ENCODE measurements at regions of chr12 and their contacts with region 1.

Region 1: DNA sequence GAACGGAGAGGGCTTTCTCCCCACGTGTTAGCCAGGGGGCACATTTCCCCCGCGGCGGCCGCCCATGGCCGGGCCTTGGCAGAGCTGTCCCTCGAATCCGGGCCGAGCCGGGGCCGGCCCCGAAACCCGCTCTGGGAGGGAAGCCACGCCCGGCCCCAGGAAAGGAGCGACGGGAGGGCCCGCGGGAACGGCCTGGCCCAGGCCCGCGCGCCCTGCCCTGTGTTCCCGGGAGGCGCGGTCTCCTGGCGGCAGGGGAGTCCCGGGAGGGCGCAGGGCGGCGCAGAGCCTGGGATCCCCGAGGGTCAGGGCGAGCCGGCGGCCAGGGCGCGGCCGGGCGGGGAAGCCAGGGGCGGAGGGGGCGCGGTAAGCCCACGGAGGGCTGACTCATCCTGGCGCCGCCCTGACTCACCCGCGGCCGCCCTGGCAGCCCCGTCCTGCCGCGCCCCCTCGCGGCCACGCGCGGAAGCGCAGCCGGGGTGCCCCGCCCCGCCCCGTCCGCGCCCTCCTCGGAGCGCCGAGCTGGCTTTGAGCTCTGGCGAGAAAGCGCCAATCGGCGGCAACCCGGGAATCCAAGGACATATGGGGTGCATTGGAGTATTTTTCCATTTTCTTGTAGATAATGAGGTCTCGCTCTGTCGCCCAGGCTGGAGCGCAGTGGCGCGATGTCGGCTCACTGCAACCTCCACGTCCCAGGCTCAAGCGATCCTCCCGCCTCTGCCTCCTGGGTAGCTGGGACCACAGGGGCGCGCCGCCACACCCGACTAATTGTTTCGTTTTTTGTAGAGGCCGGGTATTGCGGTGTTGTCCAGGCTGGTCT is 31.8 kb upstream of the PLEKHG6 start:
- DNase-seq: peak; percentile 88
- H3K4me3 Mint-ChIP-seq: peak overlapping the region; percentile 74
- H3K27ac Mint-ChIP-seq: no peak overlapping the region
- H3K4me1 Mint-ChIP-seq: peaks cover 6% of the 10 kb centered on the region
- H3K27me3 Mint-ChIP-seq: peaks cover 38% of the 10 kb centered on the region

Region 2: DNA sequence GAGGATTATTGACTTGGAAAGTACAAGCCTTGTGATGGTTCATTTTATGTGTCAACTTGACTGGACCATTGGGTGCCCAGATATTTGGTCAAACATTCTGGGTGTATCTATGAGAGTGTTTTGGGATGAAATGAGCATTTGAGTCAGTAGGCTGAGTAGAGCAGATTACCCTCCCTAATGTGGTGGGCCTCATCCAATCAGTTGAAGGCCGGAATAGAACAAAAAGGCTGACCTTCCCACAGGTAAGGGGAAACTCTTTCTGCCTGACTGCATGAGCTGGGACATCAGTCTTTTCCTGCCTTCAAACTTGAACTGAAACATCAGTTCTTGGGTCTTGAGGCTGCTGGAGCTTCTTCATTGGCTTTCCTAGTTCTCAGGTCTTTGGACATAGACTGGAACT is 431.7 kb before region 1 on chr12:
- CTCF ChIA-PET with region 1: no interaction called
- POLR2A ChIA-PET with region 1: no interaction called
- intact Hi-C with region 1: no loop called
- DNase-seq: no peak
- H3K4me3 Mint-ChIP-seq: no peak overlapping the region
- H3K27ac Mint-ChIP-seq: no peak overlapping the region
- H3K4me1 Mint-ChIP-seq: no peaks in the 10 kb centered on the region
- H3K27me3 Mint-ChIP-seq: peaks cover 2% of the 10 kb centered on the region

Region 3: DNA sequence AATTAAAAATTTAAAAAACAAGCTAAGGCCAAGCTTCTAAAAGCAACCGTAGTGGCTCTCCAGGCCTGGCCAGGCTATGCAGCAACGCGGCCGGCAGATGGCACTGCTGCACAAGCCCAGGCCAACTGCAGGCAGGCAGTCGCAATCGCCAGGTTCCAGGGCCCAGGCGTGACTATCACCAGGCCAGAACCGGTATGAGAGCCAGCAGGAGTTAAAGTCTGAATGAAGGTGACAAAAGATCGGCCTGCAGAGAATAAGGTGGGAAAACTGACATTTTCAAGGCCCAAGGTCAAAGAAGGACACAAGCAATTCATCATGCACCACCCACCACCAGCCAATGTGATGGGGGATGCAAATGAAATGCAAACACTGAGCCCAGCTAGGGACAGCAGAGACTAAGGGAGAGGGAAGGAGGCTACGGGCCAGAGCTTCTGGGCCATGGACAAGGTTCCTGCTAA is 290.0 kb before region 1 on chr12:
- CTCF ChIA-PET with region 1: interaction called, 26 read pairs
- POLR2A ChIA-PET with region 1: no interaction called
- intact Hi-C with region 1: no loop called
- DNase-seq: peak; percentile 79
- H3K4me3 Mint-ChIP-seq: no peak overlapping the region
- H3K27ac Mint-ChIP-seq: no peak overlapping the region
- H3K4me1 Mint-ChIP-seq: no peaks in the 10 kb centered on the region
- H3K27me3 Mint-ChIP-seq: no peaks in the 10 kb centered on the region

Region 4: DNA sequence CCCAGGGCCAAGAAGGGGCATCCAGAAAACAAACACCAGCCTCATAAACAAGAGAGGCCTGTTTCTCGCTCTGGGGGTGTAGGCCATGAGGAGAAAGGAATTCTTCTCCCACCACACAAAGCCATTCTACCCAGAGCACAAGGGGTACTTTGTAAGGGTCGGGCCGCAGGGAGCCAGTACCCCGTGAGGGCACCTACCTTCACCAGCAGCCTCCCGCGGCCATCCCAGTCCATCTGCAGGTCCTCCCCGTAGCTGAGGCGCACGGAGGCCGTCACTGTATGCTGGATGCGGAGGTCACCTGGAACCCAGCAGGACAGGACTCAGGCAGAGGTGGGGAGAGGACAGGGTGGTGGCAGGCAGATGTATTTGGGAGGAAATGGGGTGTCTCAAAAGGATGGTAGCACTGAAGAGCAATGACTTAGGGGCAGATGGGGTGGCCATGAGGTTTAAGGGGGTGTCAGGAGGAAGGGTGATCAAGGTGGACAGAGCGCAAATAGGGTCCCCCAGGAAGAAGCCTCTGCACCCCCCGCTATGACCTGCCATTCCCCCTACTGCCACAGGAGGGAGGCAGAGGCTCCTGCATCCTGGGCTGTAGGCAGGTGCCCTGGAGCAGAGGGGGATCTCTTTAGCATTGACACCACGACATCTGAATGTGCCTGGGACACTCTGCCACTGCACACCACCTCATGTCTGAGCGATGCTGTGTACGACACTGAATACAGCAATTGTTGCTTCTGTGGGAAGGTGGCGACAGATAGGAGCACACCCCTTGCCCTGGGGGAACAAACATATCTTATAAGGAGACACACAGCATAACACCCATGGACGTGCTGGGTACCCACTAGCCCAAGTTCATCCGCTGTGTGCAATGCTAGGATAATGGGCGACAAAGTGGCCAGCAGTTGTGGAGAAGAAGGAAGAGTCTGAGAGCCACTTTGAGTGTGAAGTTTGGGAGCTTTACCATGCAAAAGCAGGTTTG is 215.6 kb before region 1 on chr12:
- CTCF ChIA-PET with region 1: interaction called, 33 read pairs
- POLR2A ChIA-PET with region 1: no interaction called
- intact Hi-C with region 1: loop called (anchors 1 kb)
- DNase-seq: peak; percentile 66
- H3K4me3 Mint-ChIP-seq: no peak overlapping the region
- H3K27ac Mint-ChIP-seq: no peak overlapping the region
- H3K4me1 Mint-ChIP-seq: no peaks in the 10 kb centered on the region
- H3K27me3 Mint-ChIP-seq: peaks cover under 1% of the 10 kb centered on the region

Region 5: GRCh38 chr12:6167327-6168259 is 111.1 kb before region 1 on chr12:
- CTCF ChIA-PET with region 1: interaction called, 16 read pairs
- POLR2A ChIA-PET with region 1: no interaction called
- intact Hi-C with region 1: no loop called
- DNase-seq: peak; percentile 84
- H3K4me3 Mint-ChIP-seq: peak overlapping the region; percentile 28
- H3K27ac Mint-ChIP-seq: peak overlapping the region; percentile 87
- H3K4me1 Mint-ChIP-seq: peaks cover 24% of the 10 kb centered on the region
- H3K27me3 Mint-ChIP-seq: peaks cover 1% of the 10 kb centered on the region

Region 6: GRCh38 chr12:6189028-6189427 is 89.6 kb before region 1 on chr12:
- CTCF ChIA-PET with region 1: interaction called, 255 read pairs
- POLR2A ChIA-PET with region 1: no interaction called
- intact Hi-C with region 1: no loop called
- DNase-seq: no peak
- H3K4me3 Mint-ChIP-seq: no peak overlapping the region
- H3K27ac Mint-ChIP-seq: no peak overlapping the region
- H3K4me1 Mint-ChIP-seq: no peaks in the 10 kb centered on the region
- H3K27me3 Mint-ChIP-seq: peaks cover 25% of the 10 kb centered on the region

Region 7: DNA sequence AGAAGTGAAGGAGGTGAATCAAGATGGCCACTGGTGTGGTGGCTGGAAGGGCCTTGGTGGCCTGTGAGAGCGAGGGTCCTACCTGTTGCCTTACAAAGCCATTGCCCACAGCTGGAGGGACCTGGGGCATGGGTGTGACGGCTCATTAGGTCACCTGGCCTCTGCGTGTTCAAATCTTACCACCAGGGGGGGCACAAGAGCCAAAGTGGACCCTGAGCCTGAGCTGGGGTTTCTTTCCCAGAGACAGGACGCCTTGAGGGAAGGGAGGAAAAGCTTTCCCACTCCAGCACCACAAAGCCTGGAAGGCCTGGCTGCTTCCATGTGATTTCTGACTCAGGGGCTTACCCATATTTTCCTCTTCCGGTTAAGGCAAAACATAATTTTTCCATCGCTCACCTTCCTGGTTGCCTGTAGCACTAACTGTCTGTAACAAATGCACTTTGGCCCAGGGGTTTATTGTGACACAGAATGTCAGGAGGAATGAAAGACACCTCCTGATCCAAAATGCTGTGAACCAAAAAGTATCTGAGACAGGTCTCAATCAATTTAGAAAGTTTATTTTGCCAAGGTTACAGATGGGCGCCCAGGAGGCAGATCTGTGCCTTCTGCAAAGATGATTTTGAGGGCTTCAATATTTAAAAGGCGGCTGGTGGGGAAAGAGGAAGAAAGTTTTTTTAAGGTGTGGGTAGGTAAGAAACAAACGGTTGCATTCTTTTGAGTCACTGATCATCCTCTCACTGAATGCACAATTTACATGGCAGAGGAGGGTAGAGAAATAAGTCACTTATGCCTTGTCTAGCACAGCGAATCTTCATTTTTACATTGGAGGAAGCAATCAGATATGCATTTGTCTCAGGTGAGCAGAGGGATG is 82.7 kb before region 1 on chr12:
- CTCF ChIA-PET with region 1: interaction called, 255 read pairs
- POLR2A ChIA-PET with region 1: interaction called, 3 read pairs
- intact Hi-C with region 1: loop called (anchors 1 kb)
- DNase-seq: peak; percentile 81
- H3K4me3 Mint-ChIP-seq: no peak overlapping the region
- H3K27ac Mint-ChIP-seq: no peak overlapping the region
- H3K4me1 Mint-ChIP-seq: peaks cover 6% of the 10 kb centered on the region
- H3K27me3 Mint-ChIP-seq: peaks cover 31% of the 10 kb centered on the region

Region 8: DNA sequence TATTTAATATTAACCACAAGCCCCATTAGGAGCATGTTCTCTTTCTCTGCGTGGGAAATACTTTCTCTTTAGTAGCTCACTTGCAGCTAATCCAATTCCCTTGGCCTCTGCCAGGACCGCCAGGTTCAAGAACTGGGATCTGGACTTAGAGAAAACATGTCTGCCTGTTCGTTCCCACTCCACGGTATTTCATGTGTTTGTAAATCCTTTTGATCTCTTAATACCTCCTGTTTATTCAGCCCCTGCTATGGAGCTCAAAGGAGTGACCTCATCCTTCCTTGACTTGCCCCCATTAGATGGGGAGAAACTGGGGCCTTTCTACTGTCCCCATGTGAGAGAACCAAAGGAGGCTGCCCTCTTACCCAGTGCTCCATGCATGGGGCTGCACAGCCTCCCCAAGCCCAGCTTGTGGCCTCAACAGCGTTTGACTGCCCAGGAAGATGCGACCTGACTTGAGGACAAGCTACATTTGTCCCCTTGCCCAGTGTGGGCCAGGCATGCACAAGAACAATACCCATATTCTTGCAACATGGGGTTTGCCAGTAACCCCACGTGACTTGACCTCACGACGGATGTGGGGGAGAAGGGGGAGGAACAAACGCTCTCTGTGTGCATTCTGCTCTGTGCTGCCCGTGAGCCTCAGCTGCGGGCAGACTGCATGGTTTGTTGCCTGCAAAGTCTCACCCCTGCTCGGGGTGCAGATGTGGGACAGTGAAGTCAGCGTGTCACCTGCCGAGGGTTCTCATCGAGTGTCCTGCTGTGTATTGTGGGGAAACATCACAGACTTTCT is 48.1 kb before region 1 on chr12:
- CTCF ChIA-PET with region 1: interaction called, 4 read pairs
- POLR2A ChIA-PET with region 1: no interaction called
- intact Hi-C with region 1: loop called (anchors 5 kb)
- DNase-seq: peak; percentile 75
- H3K4me3 Mint-ChIP-seq: no peak overlapping the region
- H3K27ac Mint-ChIP-seq: peak overlapping the region; percentile 40
- H3K4me1 Mint-ChIP-seq: peaks cover 9% of the 10 kb centered on the region
- H3K27me3 Mint-ChIP-seq: peaks cover 2% of the 10 kb centered on the region

Region 9: DNA sequence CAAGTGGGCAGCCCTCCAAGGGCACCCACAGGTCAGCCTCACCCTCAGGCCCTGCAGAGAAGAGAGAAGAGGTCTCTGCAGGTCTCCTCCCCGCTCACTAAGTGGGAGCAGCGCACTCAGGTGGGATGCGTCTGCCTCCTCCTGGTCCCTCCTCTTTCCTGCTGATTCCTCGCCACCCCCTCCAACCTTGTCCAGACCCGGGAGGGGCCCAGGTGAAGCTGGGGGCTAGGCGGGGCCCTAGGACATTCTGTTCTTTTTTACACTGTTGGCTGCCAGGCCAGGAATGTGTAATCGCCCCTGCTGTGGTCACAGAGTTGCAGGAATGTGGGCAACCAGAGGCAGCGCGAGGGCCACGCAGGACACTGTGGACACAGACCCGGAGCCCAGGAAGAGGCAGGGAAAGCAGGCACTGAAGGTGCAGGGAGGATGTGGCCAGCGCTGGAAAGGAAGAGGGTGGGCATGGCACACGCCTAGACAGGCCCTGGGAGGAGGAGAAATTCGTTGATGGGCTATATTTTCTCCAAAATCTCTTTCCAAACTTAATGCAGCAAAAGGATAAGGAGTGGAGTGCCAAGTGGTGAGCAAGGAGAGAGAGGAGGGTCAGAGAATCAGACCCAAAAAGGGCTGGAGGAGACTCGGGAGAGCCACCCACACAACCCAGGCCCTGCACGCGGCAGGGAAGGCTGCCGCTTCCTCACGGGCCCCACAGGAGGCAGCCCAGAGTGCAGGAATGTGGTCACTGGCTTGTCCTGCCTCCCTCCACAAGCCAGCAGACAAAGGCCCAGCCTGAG is 97.6 kb after region 1 on chr12:
- CTCF ChIA-PET with region 1: no interaction called
- POLR2A ChIA-PET with region 1: no interaction called
- intact Hi-C with region 1: no loop called
- DNase-seq: peak; percentile 22
- H3K4me3 Mint-ChIP-seq: peak overlapping the region; percentile 28
- H3K27ac Mint-ChIP-seq: no peak overlapping the region
- H3K4me1 Mint-ChIP-seq: peaks cover 27% of the 10 kb centered on the region
- H3K27me3 Mint-ChIP-seq: peaks cover 2% of the 10 kb centered on the region

Measured in activated CD4-positive, alpha-beta memory T cell treated with anti-CD3 and anti-CD28 coated beads for 36 hours (primary cell).